Activated CD8-positive, alpha-beta memory T cell treated with anti-CD3 and anti-CD28 coated beads, Interleukin-2, amount 10 ng/mL, durations not matched to agents 7 days and 5 days (primary cell): ENCODE measurements at regions of chr20 and their contacts with region 1.

Region 1: GRCh38 chr20:40945754-40946450 is 82.7 kb upstream of the TOP1 start:
- DNase-seq: peak; percentile 46
- ATAC-seq: peak; percentile 36
- H3K4me3 Mint-ChIP-seq: no peak overlapping the region
- H3K27ac Mint-ChIP-seq: no peak overlapping the region
- H3K4me1 Mint-ChIP-seq: no peaks in the 10 kb centered on the region
- H3K27me3 Mint-ChIP-seq: peaks cover 25% of the 10 kb centered on the region

Region 2: DNA sequence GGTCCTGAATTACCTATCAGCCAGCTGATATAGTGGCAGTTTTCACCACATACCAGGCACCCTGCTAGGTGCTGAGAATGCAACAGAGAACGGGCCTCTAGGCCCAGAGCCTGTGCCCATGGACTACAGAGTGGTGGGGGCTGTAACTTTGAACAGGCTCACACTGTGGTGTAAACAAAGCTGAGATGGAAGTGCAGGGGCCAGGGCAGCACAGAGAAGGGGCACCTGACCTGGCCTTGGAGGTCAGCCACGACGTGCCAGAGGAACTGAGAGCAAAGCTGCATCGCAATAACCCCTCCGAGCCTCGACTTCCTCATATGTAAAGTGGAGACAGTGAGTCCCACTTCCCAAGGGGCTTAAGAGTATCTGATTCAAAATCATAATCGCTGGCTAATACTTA is 362.7 kb before region 1 on chr20:
- CTCF ChIA-PET with region 1: no interaction called
- DNase-seq: no peak
- ATAC-seq: no peak
- H3K4me3 Mint-ChIP-seq: no peak overlapping the region
- H3K27ac Mint-ChIP-seq: no peak overlapping the region
- H3K4me1 Mint-ChIP-seq: no peaks in the 10 kb centered on the region
- H3K27me3 Mint-ChIP-seq: no peaks in the 10 kb centered on the region

Region 3: GRCh38 chr20:40797425-40797824 is 148.5 kb before region 1 on chr20:
- CTCF ChIA-PET with region 1: interaction called, 11 read pairs
- DNase-seq: no peak
- ATAC-seq: no peak
- H3K4me3 Mint-ChIP-seq: no peak overlapping the region
- H3K27ac Mint-ChIP-seq: no peak overlapping the region
- H3K4me1 Mint-ChIP-seq: no peaks in the 10 kb centered on the region
- H3K27me3 Mint-ChIP-seq: peaks cover 37% of the 10 kb centered on the region

Region 4: GRCh38 chr20:40835321-40835720 is 110.6 kb before region 1 on chr20:
- CTCF ChIA-PET with region 1: no interaction called
- DNase-seq: no peak
- ATAC-seq: no peak
- H3K4me3 Mint-ChIP-seq: no peak overlapping the region
- H3K27ac Mint-ChIP-seq: no peak overlapping the region
- H3K4me1 Mint-ChIP-seq: no peaks in the 10 kb centered on the region
- H3K27me3 Mint-ChIP-seq: peaks cover 13% of the 10 kb centered on the region